ENCODE measurements at regions of chr3 and their contacts with region 1.

Region 1: DNA sequence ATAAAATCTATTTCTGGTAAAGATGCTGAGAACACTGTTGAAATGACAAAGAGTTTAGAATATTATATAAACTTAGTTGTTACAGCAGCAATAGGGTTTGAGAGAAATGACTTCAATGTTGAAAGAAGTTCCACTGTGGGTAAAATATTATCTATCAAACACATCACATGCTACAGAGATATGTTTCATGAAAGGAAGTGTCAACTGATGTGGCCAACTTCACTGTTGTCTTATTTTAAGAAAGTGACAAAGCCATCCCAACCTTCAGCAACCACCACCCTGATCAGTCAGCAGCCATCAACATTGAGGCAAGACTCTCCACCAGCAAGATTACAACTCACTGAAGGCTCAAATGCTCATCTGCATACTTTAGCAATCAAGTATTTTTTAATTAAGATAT is 20.2 kb downstream of the TMEM39A start:
- DNase-seq: no peak
- H3K4me3 ChIP-seq: no peak overlapping the region
- H3K27ac ChIP-seq: no peak overlapping the region
- H3K4me1 ChIP-seq: no peaks in the 10 kb centered on the region
- H3K27me3 ChIP-seq: no peaks in the 10 kb centered on the region
- CTCF ChIP-seq: no peak

Region 2: GRCh38 chr3:119457246-119457645 is 14.1 kb after region 1 on chr3:
- CTCF ChIA-PET with region 1: no interaction called
- POLR2A ChIA-PET with region 1: interaction called, 23 read pairs
- intact Hi-C with region 1: no loop called
- DNase-seq: no peak
- H3K4me3 ChIP-seq: no peak overlapping the region
- H3K27ac ChIP-seq: no peak overlapping the region
- H3K4me1 ChIP-seq: peaks cover 8% of the 10 kb centered on the region
- H3K27me3 ChIP-seq: no peaks in the 10 kb centered on the region
- CTCF ChIP-seq: no peak

Region 3: GRCh38 chr3:119517112-119517511 is 73.9 kb after region 1 on chr3:
- CTCF ChIA-PET with region 1: no interaction called
- POLR2A ChIA-PET with region 1: no interaction called
- intact Hi-C with region 1: loop called (anchors 10 kb)
- DNase-seq: no peak
- H3K4me3 ChIP-seq: no peak overlapping the region
- H3K27ac ChIP-seq: no peak overlapping the region
- H3K4me1 ChIP-seq: no peaks in the 10 kb centered on the region
- H3K27me3 ChIP-seq: no peaks in the 10 kb centered on the region
- CTCF ChIP-seq: no peak